GM12878 (cell line): ENCODE measurements at regions of chr1 and their contacts with region 1.

Region 1: GRCh38 chr1:101309334-101310311 is 72.8 kb downstream of the S1PR1 start:
- DNase-seq: no peak
- ATAC-seq: peak; percentile 79
- H3K4me3 ChIP-seq: peak overlapping the region; percentile 50
- H3K27ac ChIP-seq: peak overlapping the region; percentile 93
- H3K4me1 ChIP-seq: peaks cover 56% of the 10 kb centered on the region
- H3K27me3 ChIP-seq: no peaks in the 10 kb centered on the region
- CTCF ChIP-seq: peak; percentile 88 to 93 (median 92)
- EP300 ChIP-seq: peak; percentile 70 to 88; a peak in 3 of 4 replicates
- POLR2A ChIP-seq: peak; percentile 82
- RAD21 ChIP-seq: peak; percentile 88

Region 2: GRCh38 chr1:101344745-101345144 is 35.1 kb after region 1 on chr1:
- CTCF ChIA-PET with region 1: interaction called, 118 read pairs
- POLR2A ChIA-PET with region 1: interaction called, 3 read pairs
- RAD21 ChIA-PET with region 1: interaction called, 89 read pairs
- SMC1A ChIA-PET with region 1: interaction called, 28 read pairs
- in situ Hi-C with region 1: no loop called
- intact Hi-C with region 1: no loop called
- DNase-seq: no peak
- ATAC-seq: peak; percentile 65; the same call in 2 of the 3 replicates
- H3K4me3 ChIP-seq: no peak overlapping the region
- H3K27ac ChIP-seq: no peak overlapping the region
- H3K4me1 ChIP-seq: no peaks in the 10 kb centered on the region
- H3K27me3 ChIP-seq: no peaks in the 10 kb centered on the region
- CTCF ChIP-seq: no peak
- EP300 ChIP-seq: no peak
- POLR2A ChIP-seq: no peak
- RAD21 ChIP-seq: no peak

Region 3: GRCh38 chr1:101371259-101371658 is 61.6 kb after region 1 on chr1:
- CTCF ChIA-PET with region 1: interaction called, 16 read pairs
- POLR2A ChIA-PET with region 1: interaction called, 10 read pairs
- RAD21 ChIA-PET with region 1: interaction called, 45 read pairs
- SMC1A ChIA-PET with region 1: interaction called, 35 read pairs
- in situ Hi-C with region 1: no loop called
- intact Hi-C with region 1: loop called (anchors 5 kb)
- DNase-seq: peak; percentile 96
- ATAC-seq: peak; percentile 92
- H3K4me3 ChIP-seq: peak overlapping the region; percentile 53
- H3K27ac ChIP-seq: peak overlapping the region; percentile 90
- H3K4me1 ChIP-seq: peaks cover 20% of the 10 kb centered on the region
- H3K27me3 ChIP-seq: no peaks in the 10 kb centered on the region
- CTCF ChIP-seq: no peak
- EP300 ChIP-seq: peak; percentile 70 to 83; a peak in 3 of 4 replicates
- POLR2A ChIP-seq: no peak; the same call in 1 of the 2 replicates
- RAD21 ChIP-seq: peak; percentile 26

Region 4: GRCh38 chr1:101394041-101394440 is 84.4 kb after region 1 on chr1:
- CTCF ChIA-PET with region 1: interaction called, 23 read pairs
- POLR2A ChIA-PET with region 1: interaction called, 9 read pairs
- RAD21 ChIA-PET with region 1: interaction called, 33 read pairs
- SMC1A ChIA-PET with region 1: interaction called, 25 read pairs
- in situ Hi-C with region 1: no loop called
- intact Hi-C with region 1: loop called (anchors 1 kb)
- DNase-seq: no peak
- ATAC-seq: no peak
- H3K4me3 ChIP-seq: no peak overlapping the region
- H3K27ac ChIP-seq: no peak overlapping the region
- H3K4me1 ChIP-seq: peaks cover 23% of the 10 kb centered on the region
- H3K27me3 ChIP-seq: no peaks in the 10 kb centered on the region
- CTCF ChIP-seq: no peak
- EP300 ChIP-seq: no peak
- POLR2A ChIP-seq: no peak
- RAD21 ChIP-seq: no peak

Region 5: GRCh38 chr1:101444873-101445618 is 135.4 kb after region 1 on chr1:
- CTCF ChIA-PET with region 1: interaction called, 228 read pairs
- POLR2A ChIA-PET with region 1: interaction called, 14 read pairs
- RAD21 ChIA-PET with region 1: interaction called, 279 read pairs
- SMC1A ChIA-PET with region 1: interaction called, 42 read pairs
- in situ Hi-C with region 1: no loop called
- intact Hi-C with region 1: no loop called
- DNase-seq: no peak
- ATAC-seq: peak; percentile 33
- H3K4me3 ChIP-seq: no peak overlapping the region
- H3K27ac ChIP-seq: peak overlapping the region; percentile 62
- H3K4me1 ChIP-seq: peaks cover 20% of the 10 kb centered on the region
- H3K27me3 ChIP-seq: no peaks in the 10 kb centered on the region
- CTCF ChIP-seq: no peak
- EP300 ChIP-seq: no peak
- POLR2A ChIP-seq: no peak
- RAD21 ChIP-seq: no peak

Region 6: DNA sequence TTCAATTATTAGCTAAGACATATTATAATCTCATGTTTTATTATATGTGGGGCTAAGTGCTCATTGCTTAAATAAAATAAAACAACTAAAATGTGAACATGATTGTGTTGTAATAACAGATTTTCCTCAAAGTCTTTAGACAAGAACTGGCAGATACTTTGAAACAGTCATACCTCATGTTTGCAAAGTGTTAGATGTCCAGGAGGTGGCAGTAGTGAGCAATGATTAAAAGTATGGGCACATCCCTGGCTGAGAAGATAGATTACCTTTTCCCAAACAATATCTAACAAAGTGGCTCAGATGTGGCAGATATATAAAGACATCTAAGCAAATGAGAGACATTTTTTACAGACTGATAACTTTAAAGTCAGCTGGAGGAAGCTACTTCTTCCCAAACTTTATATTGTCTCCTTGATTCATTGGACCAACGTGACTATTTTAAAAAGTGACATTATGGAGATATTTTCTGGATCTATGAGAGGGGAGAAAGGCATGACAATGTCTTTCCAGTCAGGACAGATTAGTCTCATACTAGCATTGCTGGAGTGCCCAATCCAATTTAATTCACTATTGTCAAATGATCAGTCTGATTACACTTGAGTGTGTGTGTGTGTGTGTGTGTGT is 197.0 kb after region 1 on chr1:
- CTCF ChIA-PET with region 1: interaction called, 4 read pairs
- POLR2A ChIA-PET with region 1: no interaction called
- RAD21 ChIA-PET with region 1: interaction called, 3 read pairs
- SMC1A ChIA-PET with region 1: interaction called, 4 read pairs
- in situ Hi-C with region 1: no loop called
- intact Hi-C with region 1: loop called (anchors 5 kb)
- DNase-seq: peak; percentile 21
- ATAC-seq: peak; percentile 93
- H3K4me3 ChIP-seq: no peak overlapping the region
- H3K27ac ChIP-seq: no peak overlapping the region
- H3K4me1 ChIP-seq: no peaks in the 10 kb centered on the region
- H3K27me3 ChIP-seq: no peaks in the 10 kb centered on the region
- CTCF ChIP-seq: peak; percentile 61 to 77 (median 68)
- EP300 ChIP-seq: no peak
- POLR2A ChIP-seq: no peak
- RAD21 ChIP-seq: peak; percentile 53; the same call in 1 of the 2 replicates

Region 7: DNA sequence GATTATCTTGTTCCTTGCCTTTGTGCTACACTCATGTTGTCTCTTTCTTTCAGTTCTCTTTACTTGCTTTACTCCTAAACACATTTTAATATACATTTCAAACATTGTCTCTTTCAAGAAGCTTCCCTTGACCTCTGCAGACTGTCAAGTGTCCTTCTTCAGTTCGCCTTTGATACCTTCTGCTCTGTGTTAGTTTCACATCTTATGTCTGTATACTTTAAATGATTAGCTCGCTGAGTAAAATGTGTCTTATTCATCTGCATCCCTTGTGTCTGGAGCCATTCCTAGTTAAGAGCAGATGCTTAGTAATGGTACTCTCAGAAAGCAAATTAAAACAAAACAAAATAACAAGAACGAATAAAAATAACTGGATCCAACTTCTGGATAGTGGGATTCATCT is 230.5 kb after region 1 on chr1:
- CTCF ChIA-PET with region 1: no interaction called
- POLR2A ChIA-PET with region 1: no interaction called
- RAD21 ChIA-PET with region 1: no interaction called
- SMC1A ChIA-PET with region 1: no interaction called
- in situ Hi-C with region 1: no loop called
- intact Hi-C with region 1: no loop called
- DNase-seq: no peak
- ATAC-seq: no peak; the same call in 2 of the 3 replicates
- H3K4me3 ChIP-seq: no peak overlapping the region
- H3K27ac ChIP-seq: no peak overlapping the region
- H3K4me1 ChIP-seq: no peaks in the 10 kb centered on the region
- H3K27me3 ChIP-seq: no peaks in the 10 kb centered on the region
- CTCF ChIP-seq: no peak
- EP300 ChIP-seq: no peak
- POLR2A ChIP-seq: no peak
- RAD21 ChIP-seq: no peak